Aorta (tissue), 5 donors: ENCODE measurements at regions of chr5 and their contacts with region 1.

Region 1: DNA sequence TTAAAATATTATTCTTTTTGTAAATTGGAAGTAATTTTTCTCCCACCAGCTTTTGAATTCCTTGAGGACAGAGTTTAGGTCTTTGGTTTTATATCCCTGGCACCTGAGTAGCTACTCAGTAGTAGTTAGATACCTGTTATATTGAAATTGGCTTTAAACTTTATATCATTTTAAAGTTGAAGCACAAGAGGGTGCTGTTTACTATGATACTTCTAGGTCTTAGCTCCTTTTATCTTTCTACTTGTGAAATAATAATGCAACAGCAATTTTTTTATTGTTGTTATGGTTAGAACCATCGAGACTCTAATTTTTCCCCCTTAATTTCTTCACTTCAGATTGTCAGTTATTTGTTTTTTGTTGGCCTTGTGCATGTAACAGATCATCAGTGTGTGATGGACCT is 46.3 kb downstream of the AP3S1 start:
- DNase-seq: no peak
- ATAC-seq: no peak
- H3K4me3 ChIP-seq: no peak overlapping the region
- H3K27ac ChIP-seq: no peak overlapping the region
- H3K4me1 ChIP-seq: no peaks in the 10 kb centered on the region
- H3K27me3 ChIP-seq: no peaks in the 10 kb centered on the region

Region 2: DNA sequence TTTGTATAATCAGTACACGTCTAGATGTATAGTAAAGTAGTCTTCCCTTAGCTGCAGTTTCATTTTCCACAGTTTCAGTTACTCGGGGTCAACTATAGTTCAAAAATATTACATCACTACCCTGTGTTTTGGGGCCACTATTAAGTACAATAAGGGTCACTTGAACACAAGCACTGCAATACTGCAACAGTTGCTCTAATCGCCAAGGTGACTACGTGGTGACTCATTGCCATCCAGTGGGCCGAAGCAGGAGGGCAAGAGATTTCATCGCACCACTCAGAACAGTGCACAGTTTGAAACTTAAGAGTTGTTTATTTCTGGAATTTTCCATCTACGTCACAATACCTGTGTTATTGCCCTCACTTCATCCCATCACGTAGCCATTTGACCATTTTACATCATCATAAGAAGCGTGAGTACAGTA is 144.1 kb after region 1 on chr5 and contains the start of gene ARL14EPL:
- intact Hi-C with region 1: loop called in 1 of 2 experiments (anchors 5 kb)
- DNase-seq: peak; percentile 59 to 70
- ATAC-seq: peak; percentile 71
- H3K4me3 ChIP-seq: no peak within 1 kb of the TSS
- H3K27ac ChIP-seq: no peak within 1 kb of the TSS
- H3K4me1 ChIP-seq: no peaks in the 10 kb centered on the region
- H3K27me3 ChIP-seq: no peaks in the 10 kb centered on the region
- total RNA-seq, gene ARL14EPL: 0.63 TPM in 1 of 2 donors, not detected in the other